IMR-90 (cell line): ENCODE measurements at regions of chr12 and their contacts with region 1.

Region 1: DNA sequence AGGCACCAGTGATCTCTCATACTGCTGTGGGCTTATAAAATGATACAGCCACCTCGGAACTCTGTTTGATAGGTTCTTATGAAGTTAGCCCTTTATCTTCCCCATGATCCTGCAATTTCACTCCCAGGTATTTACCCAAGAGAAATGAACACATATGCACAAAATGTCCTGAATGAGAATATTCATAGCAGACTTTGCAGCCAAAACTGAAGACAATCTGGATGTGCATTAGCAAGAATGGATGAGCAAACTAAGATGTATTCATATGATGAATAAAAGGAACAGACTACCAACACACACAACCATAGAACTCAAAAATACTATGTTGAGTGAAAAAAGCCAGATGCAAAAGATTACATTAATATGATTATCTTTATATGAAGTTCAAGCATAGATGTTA is 66.7 kb downstream of the KCNA5 start:
- DNase-seq: no peak
- ATAC-seq: no peak
- H3K4me3 ChIP-seq: no peak overlapping the region
- H3K27ac ChIP-seq: no peak overlapping the region
- H3K4me1 ChIP-seq: peaks cover 9% of the 10 kb centered on the region
- H3K27me3 ChIP-seq: no peaks in the 10 kb centered on the region; the same call in 1 of the 2 replicates
- CTCF ChIP-seq: no peak
- POLR2A ChIP-seq: no peak
- RAD21 ChIP-seq: no peak

Region 2: GRCh38 chr12:5134861-5135525 is 24.6 kb after region 1 on chr12:
- CTCF ChIA-PET with region 1: no interaction called
- POLR2A ChIA-PET with region 1: no interaction called
- dilution Hi-C with region 1: no loop called
- in situ Hi-C with region 1: no loop called
- intact Hi-C with region 1: loop called (anchors 2 kb)
- DNase-seq: no peak
- ATAC-seq: no peak
- H3K4me3 ChIP-seq: no peak overlapping the region
- H3K27ac ChIP-seq: no peak overlapping the region
- H3K4me1 ChIP-seq: peaks cover 9% of the 10 kb centered on the region
- H3K27me3 ChIP-seq: peaks cover 2% of the 10 kb centered on the region
- CTCF ChIP-seq: no peak
- POLR2A ChIP-seq: no peak
- RAD21 ChIP-seq: no peak